Testis (tissue), 5 donors: ENCODE measurements at regions of chr1 and their contacts with region 1.

Region 1: GRCh38 chr1:213110349-213111300 is 59.6 kb downstream of the RPS6KC1 start:
- DNase-seq: no peak
- H3K4me3 ChIP-seq: no peak overlapping the region
- H3K27ac ChIP-seq: no peak overlapping the region
- H3K4me1 ChIP-seq: no peaks in the 10 kb centered on the region
- H3K27me3 ChIP-seq: no peaks in the 10 kb centered on the region
- CTCF ChIP-seq: no peak
- POLR2A ChIP-seq: no peak

Region 2: DNA sequence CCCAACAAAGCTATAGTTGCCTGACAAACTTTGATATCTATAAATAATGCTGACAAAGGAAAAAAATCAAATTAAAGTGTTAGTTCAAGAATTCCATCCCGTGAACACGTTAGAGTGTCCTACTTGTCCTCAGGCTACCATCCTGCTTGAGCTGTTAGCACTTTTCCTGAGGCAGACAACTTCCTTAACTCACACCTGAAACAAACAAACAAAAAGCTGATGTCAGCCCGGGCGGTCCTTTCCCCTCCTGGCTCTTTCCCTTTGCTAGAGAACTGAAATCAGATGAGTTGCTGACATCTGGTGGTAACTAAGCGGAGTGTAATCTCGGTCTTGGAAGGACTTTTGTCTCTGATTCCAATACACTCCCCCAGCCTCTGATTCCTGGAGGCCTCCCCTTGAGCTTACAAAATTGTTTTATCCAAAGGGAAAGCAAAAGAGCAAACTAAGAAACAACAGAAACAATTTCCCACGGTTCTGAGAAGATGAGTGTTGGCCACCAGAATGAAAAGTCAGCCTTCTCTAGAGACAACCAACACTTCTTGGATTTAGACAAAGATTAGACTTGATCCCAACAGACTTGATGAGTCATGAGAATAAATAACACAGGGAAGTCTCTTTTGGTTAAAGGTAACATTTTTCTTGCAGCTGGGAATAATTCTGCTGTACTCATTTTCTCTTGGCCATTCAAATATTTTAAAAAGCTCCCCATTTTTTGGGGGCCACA is 1012.6 kb after region 1 on chr1:
- intact Hi-C with region 1: loop called (anchors 10 kb)
- DNase-seq: peak; percentile 61
- H3K4me3 ChIP-seq: no peak overlapping the region
- H3K27ac ChIP-seq: no peak overlapping the region
- H3K4me1 ChIP-seq: no peaks in the 10 kb centered on the region
- H3K27me3 ChIP-seq: no peaks in the 10 kb centered on the region
- CTCF ChIP-seq: peak; percentile 38 to 63 (median 49)
- POLR2A ChIP-seq: no peak